Common myeloid progenitor, CD34-positive (primary cell): ENCODE measurements at regions of chr3 and their contacts with region 1.

Region 1: GRCh38 chr3:17841190-17841828 is 98.9 kb upstream of the TBC1D5 start:
- DNase-seq: peak; percentile 64 to 75 (median 73)
- H3K4me3 ChIP-seq: no peak overlapping the region
- H3K27ac ChIP-seq: no peak overlapping the region
- H3K4me1 ChIP-seq: peaks cover 0 to 10% (median 8%) of the 10 kb centered on the region in 4 experiments
- H3K27me3 ChIP-seq: no peaks in the 10 kb centered on the region

Region 2: GRCh38 chr3:17431004-17431403 is 410.3 kb before region 1 on chr3:
- CTCF ChIA-PET with region 1: interaction called, 43 read pairs
- POLR2A ChIA-PET with region 1: no interaction called
- DNase-seq: peak; percentile 50 to 66 (median 66)
- H3K4me3 ChIP-seq: no peak overlapping the region
- H3K27ac ChIP-seq: no peak overlapping the region
- H3K4me1 ChIP-seq: peaks cover 0 to 8% (median 0%) of the 10 kb centered on the region in 4 experiments
- H3K27me3 ChIP-seq: no peaks in the 10 kb centered on the region

Region 3: DNA sequence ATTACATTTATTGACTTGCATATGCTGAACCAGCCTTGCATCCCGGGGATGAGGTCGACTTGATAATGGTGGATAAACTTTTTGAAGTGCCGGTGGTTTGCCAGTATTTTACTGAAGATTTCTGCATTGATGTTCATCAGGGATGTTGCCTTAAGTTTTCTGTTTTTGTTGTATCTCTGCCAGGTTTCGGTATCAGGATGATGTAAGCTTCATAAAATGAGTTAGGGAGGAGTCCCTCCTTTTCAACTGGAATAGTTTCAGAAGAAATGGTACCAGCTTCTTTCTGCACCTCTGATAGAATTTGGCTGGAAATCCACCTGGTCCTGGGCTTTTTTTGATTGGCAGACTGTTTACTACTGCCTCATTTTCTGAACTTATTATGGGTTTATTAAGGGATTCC is 349.7 kb before region 1 on chr3:
- CTCF ChIA-PET with region 1: no interaction called
- POLR2A ChIA-PET with region 1: no interaction called
- DNase-seq: no peak
- H3K4me3 ChIP-seq: no peak overlapping the region
- H3K27ac ChIP-seq: no peak overlapping the region
- H3K4me1 ChIP-seq: no peaks in the 10 kb centered on the region
- H3K27me3 ChIP-seq: no peaks in the 10 kb centered on the region

Region 4: DNA sequence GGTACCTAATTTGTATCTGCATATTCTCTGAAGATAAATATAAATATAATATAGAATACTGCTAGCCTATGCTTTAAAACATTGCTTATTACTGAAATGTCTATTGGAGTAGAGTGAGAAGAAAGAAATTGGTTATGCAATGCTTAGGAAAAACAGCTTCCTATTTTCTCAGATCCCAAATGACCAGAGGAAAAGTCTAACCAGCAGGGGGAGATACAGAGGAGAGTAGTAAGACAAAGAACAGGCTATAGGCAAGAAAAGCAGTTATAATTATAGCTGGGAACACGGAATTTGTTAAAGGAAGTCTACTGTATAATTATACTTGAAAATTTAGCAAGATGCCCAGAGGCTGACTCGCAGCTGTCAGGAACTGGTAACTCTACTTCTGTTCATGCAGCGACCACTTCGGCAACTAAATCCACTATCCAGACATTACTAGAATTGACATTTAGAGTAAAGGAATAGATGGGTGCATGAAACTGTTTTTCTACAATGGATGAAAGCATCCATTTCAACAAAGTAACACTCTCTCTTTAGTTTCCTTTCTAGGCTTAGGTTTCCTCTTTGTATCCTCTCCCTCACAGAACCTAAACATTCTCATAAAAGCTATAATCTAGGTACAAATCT is 196.1 kb before region 1 on chr3:
- CTCF ChIA-PET with region 1: interaction called, 31 read pairs
- POLR2A ChIA-PET with region 1: no interaction called
- DNase-seq: peak; percentile 53 to 68 (median 64)
- H3K4me3 ChIP-seq: no peak overlapping the region
- H3K27ac ChIP-seq: no peak overlapping the region
- H3K4me1 ChIP-seq: peaks cover 0 to 8% (median 3%) of the 10 kb centered on the region in 4 experiments
- H3K27me3 ChIP-seq: no peaks in the 10 kb centered on the region

Region 5: GRCh38 chr3:17771177-17772017 is 69.9 kb before region 1 on chr3:
- CTCF ChIA-PET with region 1: interaction called, 12 read pairs
- POLR2A ChIA-PET with region 1: no interaction called
- DNase-seq: peak; percentile 13 to 64 (median 53)
- H3K4me3 ChIP-seq: no peak overlapping the region
- H3K27ac ChIP-seq: no peak overlapping the region
- H3K4me1 ChIP-seq: peaks cover 0 to 19% (median 3%) of the 10 kb centered on the region in 4 experiments
- H3K27me3 ChIP-seq: no peaks in the 10 kb centered on the region